Heart right ventricle (tissue), 16 donors: ENCODE measurements at regions of chr7 and their contacts with region 1.

Region 1: DNA sequence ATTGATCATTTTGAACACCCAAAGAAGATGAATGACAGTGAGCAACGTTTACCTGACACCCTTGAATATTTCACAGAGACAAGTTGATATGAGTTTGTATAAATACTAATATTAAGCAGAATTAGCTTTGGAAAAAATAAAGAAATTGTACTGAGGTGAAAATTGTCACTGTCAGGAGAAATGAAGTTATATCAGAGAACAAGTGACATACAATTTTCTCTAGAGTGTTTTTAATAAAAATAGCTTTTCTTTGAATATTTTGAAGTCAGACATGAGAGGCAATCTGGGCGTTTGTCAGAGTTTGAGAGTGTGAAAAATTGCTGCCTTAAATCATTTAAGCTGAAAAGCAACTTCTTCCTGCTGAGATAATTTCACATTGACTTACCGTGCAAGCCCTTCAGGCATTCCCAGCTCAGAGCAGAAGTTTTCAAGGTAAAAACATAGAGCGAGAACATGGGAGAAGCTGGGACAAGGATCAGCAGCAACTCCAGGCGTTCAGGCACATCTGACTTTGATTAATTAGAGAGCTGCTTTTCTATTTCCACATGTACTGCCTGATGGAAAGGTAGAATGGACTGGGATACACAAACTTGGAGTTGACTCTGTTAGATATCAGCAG is 535.9 kb downstream of the TFEC start:
- DNase-seq: no peak
- ATAC-seq: no peak
- H3K4me3 ChIP-seq: no peak overlapping the region
- H3K27ac ChIP-seq: no peak overlapping the region
- H3K4me1 ChIP-seq: no peaks in the 10 kb centered on the region
- H3K27me3 ChIP-seq: peaks cover 0 to 12% (median 4%) of the 10 kb centered on the region in 7 donors
- CTCF ChIP-seq: no peak

Region 2: GRCh38 chr7:115548756-115549155 is 54.1 kb after region 1 on chr7:
- intact Hi-C with region 1: loop called in 1 of 10 experiments (anchors 5 kb)
- DNase-seq: no peak
- ATAC-seq: no peak
- H3K4me3 ChIP-seq: no peak overlapping the region
- H3K27ac ChIP-seq: no peak overlapping the region
- H3K4me1 ChIP-seq: no peaks in the 10 kb centered on the region
- H3K27me3 ChIP-seq: no peaks in the 10 kb centered on the region
- CTCF ChIP-seq: no peak

Region 3: DNA sequence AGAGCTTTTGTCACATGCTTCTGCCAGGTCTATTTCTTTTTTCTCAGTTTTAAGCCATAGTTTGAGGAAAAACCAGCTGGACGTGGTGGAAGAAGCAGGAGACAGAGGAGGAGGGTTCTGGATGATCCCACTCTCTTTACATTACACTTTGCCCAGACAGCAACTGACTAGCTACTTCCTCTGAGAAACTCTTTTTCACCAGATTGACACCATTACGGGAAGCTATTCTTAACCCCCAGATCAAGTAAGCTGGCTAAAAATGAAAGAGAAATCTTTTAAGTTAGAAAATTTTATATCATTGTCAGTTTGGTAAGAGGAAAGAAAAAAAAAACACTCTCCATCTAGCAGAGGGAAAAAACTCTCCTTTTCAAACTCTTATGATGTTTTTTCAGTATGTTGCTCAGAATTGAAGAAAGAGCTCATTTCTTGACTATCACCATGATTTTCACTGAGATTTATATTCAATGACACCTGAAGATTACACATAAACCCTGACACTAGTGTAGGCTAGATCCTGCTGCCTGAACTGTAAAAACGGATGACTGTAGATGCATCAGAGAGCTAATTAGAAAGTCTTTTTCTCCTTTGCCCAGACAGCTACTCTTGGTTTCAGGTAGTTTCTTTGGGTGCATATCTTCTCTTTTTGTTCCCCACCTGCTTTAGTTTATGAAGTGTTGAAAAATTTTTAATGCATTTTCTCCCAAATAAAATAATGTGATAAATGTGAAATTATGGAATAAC is 332.8 kb after region 1 on chr7:
- intact Hi-C with region 1: no loop called
- DNase-seq: no peak
- ATAC-seq: no peak
- H3K4me3 ChIP-seq: no peak overlapping the region
- H3K27ac ChIP-seq: no peak overlapping the region
- H3K4me1 ChIP-seq: no peaks in the 10 kb centered on the region
- H3K27me3 ChIP-seq: no peaks in the 10 kb centered on the region
- CTCF ChIP-seq: no peak